ENCODE measurements at regions of chr10 and their contacts with region 1.

Region 1: GRCh38 chr10:60443346-60443745 is 53.7 kb upstream of the ANK3 start:
- DNase-seq: no peak
- H3K4me3 ChIP-seq: no peak overlapping the region
- H3K27ac ChIP-seq: no peak overlapping the region
- H3K4me1 ChIP-seq: peaks cover 20% of the 10 kb centered on the region
- H3K27me3 ChIP-seq: no peaks in the 10 kb centered on the region
- CTCF ChIP-seq: no peak

Region 2: GRCh38 chr10:60646966-60647796 is 203.8 kb after region 1 on chr10:
- intact Hi-C with region 1: loop called (anchors 2 kb)
- DNase-seq: no peak
- H3K4me3 ChIP-seq: no peak overlapping the region
- H3K27ac ChIP-seq: no peak overlapping the region
- H3K4me1 ChIP-seq: no peaks in the 10 kb centered on the region
- H3K27me3 ChIP-seq: no peaks in the 10 kb centered on the region
- CTCF ChIP-seq: peak; percentile 81